Psoas muscle (tissue), 8 donors: ENCODE measurements at regions of chr9 and their contacts with region 1.

Region 1: DNA sequence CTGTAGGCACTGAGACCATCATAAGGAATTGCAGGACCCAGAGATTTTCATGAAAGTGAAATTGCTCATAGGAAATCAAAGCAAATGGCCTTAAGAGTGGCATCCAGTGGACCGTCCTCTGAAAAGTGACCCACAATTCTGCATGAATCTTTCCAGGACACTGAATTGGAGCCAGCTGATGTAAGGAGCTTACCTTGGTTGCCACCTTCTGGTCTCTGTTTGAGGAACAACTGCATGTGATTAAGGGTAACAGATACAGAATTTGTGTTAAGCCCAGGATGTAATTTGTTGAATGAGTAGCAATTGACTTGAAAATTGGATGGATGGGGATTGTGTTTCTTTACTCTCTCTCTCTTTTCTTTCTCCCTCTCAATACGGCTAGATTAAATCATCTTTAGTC is 49.9 kb upstream of the GAS1 start:
- DNase-seq: no peak
- ATAC-seq: no peak
- H3K4me3 ChIP-seq: no peak overlapping the region
- H3K27ac ChIP-seq: no peak overlapping the region
- H3K4me1 ChIP-seq: no peaks in the 10 kb centered on the region
- H3K27me3 ChIP-seq: no peaks in the 10 kb centered on the region
- CTCF ChIP-seq: no peak

Region 2: DNA sequence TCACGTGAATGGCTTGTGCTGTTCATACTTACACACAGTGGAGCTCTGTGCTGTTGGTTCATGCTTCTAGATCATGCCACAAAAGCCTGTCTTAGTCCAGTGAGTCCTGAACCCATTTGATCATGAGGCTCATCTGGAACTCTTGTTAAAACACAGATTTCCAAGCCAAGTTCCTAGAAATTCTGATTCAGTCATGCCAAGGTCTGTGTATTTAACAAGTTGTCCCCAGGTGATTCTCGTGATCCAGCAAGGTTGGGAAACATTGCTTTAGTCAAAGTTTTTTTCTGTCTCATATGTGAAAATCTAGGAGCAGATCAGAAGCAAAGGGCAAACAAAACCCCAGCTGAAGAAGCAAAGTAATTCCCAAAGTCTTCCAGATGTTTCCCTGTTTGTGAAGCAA is 62.6 kb after region 1 on chr9:
- intact Hi-C with region 1: loop called in 1 of 2 experiments (anchors 10 kb)
- DNase-seq: no peak
- ATAC-seq: peak in 1 of 4 donors; percentile 24
- H3K4me3 ChIP-seq: no peak overlapping the region
- H3K27ac ChIP-seq: no peak overlapping the region
- H3K4me1 ChIP-seq: peaks cover 8% of the 10 kb centered on the region
- H3K27me3 ChIP-seq: no peaks in the 10 kb centered on the region
- CTCF ChIP-seq: no peak